Sciatic nerve (tissue), 2 donors: ENCODE measurements at regions of chr6 and their contacts with region 1.

Region 1: DNA sequence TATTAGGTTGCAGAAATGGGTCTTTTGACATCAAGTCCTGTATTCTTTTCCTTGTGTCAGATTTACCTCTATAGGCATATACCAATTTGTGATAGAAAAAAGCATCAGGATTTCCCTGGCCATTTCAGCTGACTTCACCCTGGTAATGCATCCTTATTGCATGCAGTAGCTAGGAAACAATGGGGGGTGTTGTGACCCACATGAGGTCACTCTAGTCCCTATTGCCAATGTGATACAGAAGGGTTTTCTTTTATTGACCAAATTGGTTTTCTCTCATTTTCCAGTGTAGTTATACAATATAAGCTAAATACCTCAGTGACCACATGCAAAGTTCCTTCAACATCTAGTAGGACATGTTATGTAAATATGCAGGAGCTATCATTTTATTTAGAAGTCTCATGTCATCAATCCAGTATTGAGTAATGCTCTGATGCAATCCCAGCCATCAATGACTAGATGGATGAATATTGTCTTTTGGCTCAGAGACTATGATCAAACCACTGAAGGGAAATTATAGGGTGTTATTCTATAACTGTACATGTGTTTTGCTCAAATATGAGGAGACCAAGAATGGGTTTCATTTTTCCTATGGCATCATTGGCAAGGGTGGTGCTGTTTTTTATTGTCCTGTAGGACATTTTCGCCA is 177.7 kb downstream of the KLHL32 start:
- DNase-seq: no peak
- ATAC-seq: no peak

Region 2: DNA sequence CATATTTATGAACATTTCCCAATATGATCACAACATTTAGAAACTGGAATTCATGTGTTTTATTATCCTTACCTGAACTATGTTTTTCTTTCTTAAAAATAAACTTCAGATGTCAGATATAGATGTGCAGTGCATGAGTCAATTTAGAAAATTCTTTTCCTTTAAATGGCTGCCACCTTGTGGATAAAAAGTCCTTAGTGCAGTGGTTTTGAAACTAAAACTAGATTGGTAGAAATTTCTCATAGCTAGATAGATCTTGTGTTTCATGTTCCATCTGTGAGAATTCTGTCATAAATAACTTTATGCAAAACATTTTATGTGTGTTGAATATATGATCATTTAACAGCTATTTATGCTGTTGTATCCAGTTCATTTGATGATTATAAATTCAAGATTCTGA is 42.8 kb before region 1 on chr6:
- intact Hi-C with region 1: no loop called
- DNase-seq: no peak
- ATAC-seq: peak; percentile 49

Region 3: DNA sequence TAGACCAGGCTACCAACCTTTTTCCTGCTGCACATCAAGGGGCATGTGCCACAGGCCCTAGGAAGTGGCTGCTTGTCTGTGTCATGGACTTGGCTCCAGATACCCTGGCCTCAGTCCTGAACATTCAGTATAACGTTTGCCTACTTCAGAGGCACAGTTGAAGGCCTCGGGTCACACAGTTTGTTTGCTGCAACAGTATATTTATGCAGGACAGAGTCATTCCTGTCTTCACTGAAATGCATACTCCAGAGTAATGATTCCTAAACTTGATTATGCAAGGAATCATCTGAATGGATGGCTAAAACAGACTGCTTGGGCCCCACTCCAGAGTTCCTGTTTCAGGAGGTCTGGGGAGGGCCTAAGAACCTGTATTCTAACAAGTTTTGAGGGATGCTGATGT is 28.4 kb before region 1 on chr6:
- intact Hi-C with region 1: loop called (anchors 1 kb)
- DNase-seq: no peak
- ATAC-seq: no peak